ENCODE measurements at regions of chr3 and their contacts with region 1.

Region 1: DNA sequence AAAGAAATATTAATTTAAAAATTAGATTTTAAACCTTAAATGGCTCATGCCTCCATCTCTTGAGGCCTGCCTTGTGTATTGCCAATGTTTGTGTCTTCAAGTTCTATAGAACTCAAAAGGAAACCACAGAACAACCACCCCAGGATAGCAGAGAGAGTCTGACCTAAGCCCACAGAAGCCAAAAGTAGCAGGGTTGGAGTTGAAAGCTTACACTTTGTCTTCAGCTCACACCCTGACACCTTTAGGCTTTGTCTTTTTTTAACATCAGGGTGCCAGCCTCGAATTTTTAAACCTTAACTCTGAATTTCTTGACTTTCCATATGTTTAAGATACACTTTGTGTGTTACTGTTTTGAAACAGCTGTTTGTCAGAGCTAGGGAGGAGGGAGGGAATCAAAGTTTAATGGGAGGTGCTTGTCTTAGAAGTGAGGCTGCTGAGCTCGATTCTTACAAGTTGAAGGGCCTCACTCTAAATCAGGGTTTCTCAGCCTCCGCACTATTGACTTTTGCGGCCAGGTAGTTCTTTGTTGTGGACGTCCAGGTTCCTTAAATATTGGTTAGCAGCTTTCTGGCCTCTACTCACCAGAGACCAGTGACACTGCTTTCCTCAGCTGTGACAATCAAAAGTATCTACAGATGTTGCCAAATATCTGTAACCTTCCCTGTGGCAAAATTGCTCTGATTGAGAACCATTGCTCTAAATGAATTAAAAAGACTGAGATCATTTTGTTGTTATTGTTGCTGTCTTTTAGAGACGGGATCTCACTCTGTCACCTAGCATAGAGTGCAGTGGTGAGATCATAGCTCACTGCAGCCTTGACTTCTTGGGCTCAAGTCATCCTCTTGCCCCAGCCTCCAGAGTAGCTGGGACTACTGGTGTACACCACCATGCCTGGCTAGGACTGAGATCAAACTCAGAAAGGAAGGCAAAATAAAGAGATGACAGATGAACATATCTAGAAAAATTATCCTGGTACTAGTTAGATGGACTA is 139.2 kb upstream of the EOMES start:
- DNase-seq: peak in 4 of 5 donors; percentile 34 to 46 (median 42)
- H3K4me3 ChIP-seq: peak overlapping the region in 1 of 2 donors; percentile 2
- H3K4me3 Mint-ChIP-seq: peak overlapping the region in 7 of 8 donors; percentile 27 to 67 (median 50)
- H3K27ac ChIP-seq: peak overlapping the region; percentile 32
- H3K27ac Mint-ChIP-seq: peak overlapping the region; percentile 74 to 93 (median 88)
- H3K4me1 ChIP-seq: peaks cover 41% of the 10 kb centered on the region
- H3K4me1 Mint-ChIP-seq: peaks cover 32 to 56% (median 47%) of the 10 kb centered on the region in 4 donors
- H3K27me3 ChIP-seq: no peaks in the 10 kb centered on the region
- H3K27me3 Mint-ChIP-seq: no peaks in the 10 kb centered on the region

Region 2: DNA sequence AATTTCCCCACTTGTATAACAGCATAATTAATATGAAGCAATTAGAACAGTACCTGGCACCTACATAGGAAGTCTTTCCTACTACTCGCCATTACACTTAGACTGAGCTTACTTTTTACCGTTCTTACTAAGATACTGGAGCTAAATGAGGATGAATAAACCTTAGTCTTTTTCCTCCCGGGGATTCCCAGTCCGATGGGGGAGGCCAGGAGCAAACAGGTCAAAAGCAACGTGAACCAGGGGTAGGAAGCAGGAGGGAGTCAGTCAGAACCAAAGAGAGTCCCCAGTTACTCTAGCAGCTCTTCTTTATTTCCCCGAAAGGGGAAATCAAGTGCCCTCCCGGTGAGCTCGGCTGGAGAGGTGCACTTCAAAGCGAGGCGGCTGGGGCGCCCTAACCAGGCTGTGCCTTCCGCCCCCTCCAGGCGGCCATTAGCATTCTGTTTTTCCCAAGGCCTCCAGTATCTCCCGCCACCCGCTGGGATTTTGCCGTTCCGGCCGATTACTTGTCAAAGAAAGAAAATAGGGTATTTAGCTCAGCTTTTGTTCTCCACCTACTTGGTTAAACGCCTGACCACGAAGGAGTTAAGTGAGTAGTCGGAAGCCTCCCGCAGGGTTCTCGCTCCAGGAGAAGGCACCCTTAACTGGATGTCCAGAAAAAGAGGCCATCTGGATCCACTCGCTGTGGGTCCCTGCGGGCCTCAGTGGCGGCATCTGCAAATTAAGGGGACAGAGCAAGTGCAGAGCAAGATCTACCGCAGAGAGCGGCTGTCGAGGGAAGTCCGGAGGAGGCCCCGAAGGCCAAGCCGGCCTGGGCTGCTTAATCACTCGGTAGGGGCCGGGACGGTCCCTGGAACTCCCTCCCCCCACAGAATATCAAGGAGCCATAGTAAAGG is 132.9 kb before region 1 on chr3:
- CTCF ChIA-PET with region 1: no interaction called
- POLR2A ChIA-PET with region 1: no interaction called
- intact Hi-C with region 1: loop called (anchors 5 kb)
- DNase-seq: no peak
- H3K4me3 ChIP-seq: peak overlapping the region in 1 of 2 donors; percentile 2
- H3K4me3 Mint-ChIP-seq: peak overlapping the region; percentile 58 to 86 (median 72)
- H3K27ac ChIP-seq: no peak overlapping the region
- H3K27ac Mint-ChIP-seq: no peak overlapping the region
- H3K4me1 ChIP-seq: peaks cover 48% of the 10 kb centered on the region
- H3K4me1 Mint-ChIP-seq: peaks cover 31 to 54% (median 42%) of the 10 kb centered on the region in 4 donors
- H3K27me3 ChIP-seq: peaks cover 63% of the 10 kb centered on the region
- H3K27me3 Mint-ChIP-seq: peaks cover 70 to 71% of the 10 kb centered on the region in 2 donors

Region 3: GRCh38 chr3:27813255-27813654 is 48.1 kb before region 1 on chr3:
- CTCF ChIA-PET with region 1: no interaction called
- POLR2A ChIA-PET with region 1: no interaction called
- intact Hi-C with region 1: no loop called
- DNase-seq: no peak
- H3K4me3 ChIP-seq: no peak overlapping the region
- H3K4me3 Mint-ChIP-seq: no peak overlapping the region
- H3K27ac ChIP-seq: no peak overlapping the region
- H3K27ac Mint-ChIP-seq: no peak overlapping the region
- H3K4me1 ChIP-seq: no peaks in the 10 kb centered on the region
- H3K4me1 Mint-ChIP-seq: no peaks in the 10 kb centered on the region
- H3K27me3 ChIP-seq: no peaks in the 10 kb centered on the region
- H3K27me3 Mint-ChIP-seq: no peaks in the 10 kb centered on the region

Region 4: DNA sequence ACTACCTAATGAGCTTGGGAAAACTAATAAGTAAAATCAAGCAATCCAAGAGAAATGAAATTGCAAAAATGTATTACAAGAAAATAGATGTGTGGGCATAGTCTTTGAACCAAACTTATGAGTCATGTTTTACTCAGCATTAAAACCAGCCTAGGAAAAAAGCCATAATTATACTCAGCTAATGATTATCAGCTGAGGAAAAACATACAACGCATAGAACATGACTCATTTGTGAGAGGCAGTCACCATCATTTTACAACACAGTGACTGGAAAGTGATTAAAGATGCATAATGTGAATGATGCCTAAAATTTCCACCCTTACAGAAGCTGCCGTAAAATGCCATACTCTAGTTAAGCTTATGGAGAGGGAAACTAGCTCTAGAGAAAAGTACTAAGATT is 98.8 kb after region 1 on chr3:
- CTCF ChIA-PET with region 1: no interaction called
- POLR2A ChIA-PET with region 1: no interaction called
- intact Hi-C with region 1: no loop called
- DNase-seq: no peak
- H3K4me3 ChIP-seq: no peak overlapping the region
- H3K4me3 Mint-ChIP-seq: no peak overlapping the region
- H3K27ac ChIP-seq: no peak overlapping the region
- H3K27ac Mint-ChIP-seq: no peak overlapping the region
- H3K4me1 ChIP-seq: no peaks in the 10 kb centered on the region
- H3K4me1 Mint-ChIP-seq: peaks cover 0 to 3% (median under 1%) of the 10 kb centered on the region in 4 donors
- H3K27me3 ChIP-seq: no peaks in the 10 kb centered on the region
- H3K27me3 Mint-ChIP-seq: no peaks in the 10 kb centered on the region

Region 5: GRCh38 chr3:28151608-28152228 is 290.4 kb after region 1 on chr3:
- CTCF ChIA-PET with region 1: no interaction called
- POLR2A ChIA-PET with region 1: no interaction called
- intact Hi-C with region 1: no loop called
- DNase-seq: peak in 2 of 5 donors; percentile 1 to 2
- H3K4me3 ChIP-seq: no peak overlapping the region
- H3K4me3 Mint-ChIP-seq: peak overlapping the region in 7 of 8 donors; percentile 44 to 79 (median 66)
- H3K27ac ChIP-seq: no peak overlapping the region
- H3K27ac Mint-ChIP-seq: peak overlapping the region in 5 of 7 donors; percentile 60 to 83 (median 72)
- H3K4me1 ChIP-seq: peaks cover 11% of the 10 kb centered on the region
- H3K4me1 Mint-ChIP-seq: peaks cover 6 to 19% (median 10%) of the 10 kb centered on the region in 4 donors
- H3K27me3 ChIP-seq: no peaks in the 10 kb centered on the region
- H3K27me3 Mint-ChIP-seq: peaks cover 0 to 1% of the 10 kb centered on the region in 2 donors

Region 6: DNA sequence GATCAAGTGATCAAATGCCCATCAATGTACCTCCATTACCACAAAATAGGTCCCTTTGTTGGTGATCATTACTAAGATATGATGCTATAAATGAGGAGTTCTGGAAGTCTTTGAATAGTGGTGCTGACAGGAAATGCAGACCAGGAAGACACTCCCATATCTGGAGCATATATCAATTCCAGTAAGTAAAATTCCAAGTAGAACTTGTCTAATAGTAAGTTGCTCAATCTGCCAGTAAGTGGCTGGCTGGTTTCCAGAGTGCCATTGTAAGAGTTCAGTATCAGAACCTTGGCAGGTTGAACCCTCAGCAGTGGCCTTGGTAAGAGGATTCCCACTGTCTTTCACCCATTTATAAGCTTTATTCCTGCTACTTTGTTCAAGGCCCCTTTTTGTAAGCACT is 1039.7 kb after region 1 on chr3:
- CTCF ChIA-PET with region 1: no interaction called
- POLR2A ChIA-PET with region 1: no interaction called
- intact Hi-C with region 1: no loop called
- DNase-seq: no peak
- H3K4me3 ChIP-seq: no peak overlapping the region
- H3K4me3 Mint-ChIP-seq: no peak overlapping the region
- H3K27ac ChIP-seq: no peak overlapping the region
- H3K27ac Mint-ChIP-seq: no peak overlapping the region
- H3K4me1 ChIP-seq: no peaks in the 10 kb centered on the region
- H3K4me1 Mint-ChIP-seq: no peaks in the 10 kb centered on the region
- H3K27me3 ChIP-seq: no peaks in the 10 kb centered on the region
- H3K27me3 Mint-ChIP-seq: no peaks in the 10 kb centered on the region

Measured in CD4-positive, alpha-beta memory T cell (primary cell).